HCT116 (cell line): ENCODE measurements at regions of chr2 and their contacts with region 1.

Region 1: DNA sequence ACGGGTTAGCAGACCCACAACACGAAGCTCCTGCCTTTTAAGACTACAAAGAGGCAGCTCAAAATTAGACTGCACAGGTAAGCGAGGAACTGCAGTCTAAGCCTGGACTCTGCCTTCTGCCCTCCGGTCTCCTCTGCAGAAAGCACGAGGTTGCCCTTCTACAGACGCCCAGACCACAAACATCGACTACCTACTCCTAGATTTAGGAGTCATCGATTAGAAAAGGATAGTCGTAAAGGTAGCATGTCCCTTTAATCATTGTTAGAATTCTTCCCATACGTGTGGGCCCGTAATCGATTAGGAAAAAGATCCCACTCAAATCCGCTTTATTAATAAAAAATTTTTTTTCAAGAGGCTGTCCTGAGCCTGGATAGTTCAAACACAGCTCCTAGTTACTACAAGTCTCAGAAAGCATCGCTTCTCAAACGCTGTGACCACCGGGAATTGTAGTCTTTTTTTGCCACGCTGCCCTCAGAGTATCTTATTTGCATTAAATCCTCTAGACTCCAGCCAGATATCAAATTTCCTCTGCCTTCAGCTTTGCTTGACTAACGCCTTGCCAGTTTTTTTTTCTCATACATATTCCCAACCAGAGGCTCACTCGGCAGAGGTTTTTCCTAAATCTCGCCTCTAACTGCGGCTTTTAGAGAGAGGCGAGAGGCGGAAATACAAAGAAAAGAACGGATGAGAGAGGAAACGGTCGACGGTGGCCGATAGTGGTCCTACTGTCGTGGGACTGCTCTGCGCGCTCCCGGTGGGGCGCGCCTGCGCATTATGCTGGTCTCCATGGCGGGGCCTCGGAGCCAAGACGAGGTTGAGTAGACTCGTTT is at the starts of genes CARF and WDR12:
- DNase-seq: peak; percentile 91
- ATAC-seq: peak; percentile 86
- H3K4me3 ChIP-seq: peak within 1 kb of the TSS; percentile 90 to 94
- H3K27ac ChIP-seq: peak within 1 kb of the TSS; percentile 88
- H3K4me1 ChIP-seq: peaks cover 0 to 10% of the 10 kb centered on the region in 2 experiments; a peak in 2 of 4 replicates
- H3K27me3 ChIP-seq: no peaks in the 10 kb centered on the region
- CTCF ChIP-seq: no peak
- POLR2A ChIP-seq: peak; percentile 60
- RAD21 ChIP-seq: no peak; the same call in 1 of the 2 replicates
- total RNA-seq, gene CARF: 4.2 TPM
- total RNA-seq, gene WDR12: 140 TPM

Region 2: GRCh38 chr2:203238704-203239526 is 327.2 kb after region 1 on chr2 and contains the start of gene CYP20A1:
- CTCF ChIA-PET with region 1: no interaction called
- POLR2A ChIA-PET with region 1: no interaction called
- RAD21 ChIA-PET with region 1: no interaction called
- intact Hi-C with region 1: loop called (anchors 2 kb)
- DNase-seq: peak; percentile 89
- ATAC-seq: peak; percentile 92
- H3K4me3 ChIP-seq: peak within 1 kb of the TSS; percentile 93 to 95
- H3K27ac ChIP-seq: peak within 1 kb of the TSS; percentile 83
- H3K4me1 ChIP-seq: peaks cover 6 to 22% of the 10 kb centered on the region in 2 experiments; a peak in 3 of 4 replicates
- H3K27me3 ChIP-seq: no peaks in the 10 kb centered on the region
- CTCF ChIP-seq: peak; percentile 16 to 33 (median 18); a peak in 3 of 6 replicates
- POLR2A ChIP-seq: peak; percentile 91
- RAD21 ChIP-seq: peak; percentile 28
- total RNA-seq, gene CYP20A1: 10.0 TPM